Activated CD4-positive, alpha-beta memory T cell treated with anti-CD3 and anti-CD28 coated beads, Interleukin-2, amount 10 ng/mL, durations not matched to agents 7 days and 5 days (primary cell): ENCODE measurements at regions of chr5 and their contacts with region 1.

Region 1: DNA sequence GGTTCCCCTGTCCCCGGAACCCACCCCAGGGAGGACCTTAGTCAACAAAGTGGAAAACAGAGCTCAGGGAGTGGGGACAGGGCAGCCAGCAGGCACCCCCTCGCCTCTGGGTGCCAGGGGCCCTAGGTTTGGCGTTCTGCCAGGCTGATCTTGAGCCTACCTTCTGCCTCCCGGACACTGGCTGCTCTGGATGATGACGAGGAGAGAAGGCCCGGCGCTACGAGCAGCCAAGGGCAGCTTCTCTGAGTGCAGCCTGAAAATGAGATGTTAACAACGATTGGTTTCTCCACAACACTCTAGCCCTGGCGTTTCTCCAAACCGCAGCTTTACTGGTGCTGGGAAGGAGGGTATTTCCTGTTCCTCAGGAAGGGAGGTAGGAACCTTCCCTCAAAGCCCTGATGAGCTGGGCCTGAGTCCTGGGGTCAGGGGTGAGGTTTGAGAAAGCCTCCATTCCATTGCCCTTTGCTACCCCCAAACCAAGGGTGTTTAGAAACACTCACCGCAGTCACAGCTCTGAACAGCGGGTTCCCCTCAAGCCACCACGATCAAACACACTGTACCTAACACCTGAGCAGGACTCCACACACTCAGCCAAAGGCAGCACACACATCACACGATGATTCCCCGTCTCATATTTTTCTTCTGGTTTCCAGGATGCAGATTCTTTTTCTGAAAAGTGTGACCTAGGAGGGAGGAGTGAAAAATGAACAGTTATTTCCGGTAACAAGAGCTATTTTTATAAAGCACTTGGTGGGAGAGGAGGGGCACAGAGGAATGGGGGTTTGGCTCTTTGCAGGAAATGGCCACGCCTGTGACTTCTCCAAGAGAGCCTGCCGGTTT is at the start of gene STING1:
- DNase-seq: peak; percentile 67
- H3K4me3 Mint-ChIP-seq: peak within 1 kb of the TSS; percentile 96
- H3K27ac Mint-ChIP-seq: peak within 1 kb of the TSS; percentile 98
- H3K4me1 Mint-ChIP-seq: peaks cover 45% of the 10 kb centered on the region
- H3K27me3 Mint-ChIP-seq: no peaks in the 10 kb centered on the region
- total RNA-seq, gene STING1: 277 to 281 TPM

Region 2: GRCh38 chr5:139126711-139127111 is 355.6 kb before region 1 on chr5:
- CTCF ChIA-PET with region 1: no interaction called
- POLR2A ChIA-PET with region 1: no interaction called
- DNase-seq: no peak
- H3K4me3 Mint-ChIP-seq: no peak overlapping the region
- H3K27ac Mint-ChIP-seq: no peak overlapping the region
- H3K4me1 Mint-ChIP-seq: no peaks in the 10 kb centered on the region
- H3K27me3 Mint-ChIP-seq: no peaks in the 10 kb centered on the region

Region 3: DNA sequence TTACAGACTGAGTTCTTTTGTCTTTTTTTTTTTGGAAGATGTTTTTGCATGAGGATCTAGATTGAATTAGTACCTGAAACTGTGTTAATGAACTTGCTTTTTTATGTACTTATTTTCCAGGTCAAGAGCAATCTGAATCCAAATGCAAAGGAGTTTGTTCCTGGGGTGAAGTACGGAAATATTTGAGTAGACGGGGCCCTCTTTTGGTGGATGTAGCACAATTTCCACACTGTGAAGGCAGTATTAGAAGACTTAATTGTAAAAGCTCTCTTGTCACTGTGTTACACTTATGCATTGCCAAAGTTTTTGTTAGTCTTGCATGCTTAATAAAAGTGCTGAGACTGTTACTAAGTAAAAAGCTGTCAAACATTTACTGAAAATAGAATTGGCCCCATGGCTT is 113.7 kb before region 1 on chr5:
- CTCF ChIA-PET with region 1: no interaction called
- POLR2A ChIA-PET with region 1: no interaction called
- DNase-seq: no peak
- H3K4me3 Mint-ChIP-seq: no peak overlapping the region
- H3K27ac Mint-ChIP-seq: no peak overlapping the region
- H3K4me1 Mint-ChIP-seq: peaks cover 21% of the 10 kb centered on the region
- H3K27me3 Mint-ChIP-seq: no peaks in the 10 kb centered on the region

Region 4: GRCh38 chr5:139417214-139417613 is 65.1 kb before region 1 on chr5:
- CTCF ChIA-PET with region 1: interaction called, 23 read pairs
- POLR2A ChIA-PET with region 1: interaction called, 27 read pairs
- DNase-seq: no peak
- H3K4me3 Mint-ChIP-seq: no peak overlapping the region
- H3K27ac Mint-ChIP-seq: peak overlapping the region; percentile 93
- H3K4me1 Mint-ChIP-seq: peaks cover 83% of the 10 kb centered on the region
- H3K27me3 Mint-ChIP-seq: no peaks in the 10 kb centered on the region

Region 5: GRCh38 chr5:139439013-139439903 is 43.0 kb before region 1 on chr5 and contains the start of gene DNAJC18:
- CTCF ChIA-PET with region 1: interaction called, 15 read pairs
- POLR2A ChIA-PET with region 1: interaction called, 55 read pairs
- DNase-seq: peak; percentile 92
- H3K4me3 Mint-ChIP-seq: peak within 1 kb of the TSS; percentile 92
- H3K27ac Mint-ChIP-seq: peak within 1 kb of the TSS; percentile 98
- H3K4me1 Mint-ChIP-seq: peaks cover 70% of the 10 kb centered on the region
- H3K27me3 Mint-ChIP-seq: no peaks in the 10 kb centered on the region
- total RNA-seq, gene DNAJC18: 16.1 to 17.0 TPM

Region 6: DNA sequence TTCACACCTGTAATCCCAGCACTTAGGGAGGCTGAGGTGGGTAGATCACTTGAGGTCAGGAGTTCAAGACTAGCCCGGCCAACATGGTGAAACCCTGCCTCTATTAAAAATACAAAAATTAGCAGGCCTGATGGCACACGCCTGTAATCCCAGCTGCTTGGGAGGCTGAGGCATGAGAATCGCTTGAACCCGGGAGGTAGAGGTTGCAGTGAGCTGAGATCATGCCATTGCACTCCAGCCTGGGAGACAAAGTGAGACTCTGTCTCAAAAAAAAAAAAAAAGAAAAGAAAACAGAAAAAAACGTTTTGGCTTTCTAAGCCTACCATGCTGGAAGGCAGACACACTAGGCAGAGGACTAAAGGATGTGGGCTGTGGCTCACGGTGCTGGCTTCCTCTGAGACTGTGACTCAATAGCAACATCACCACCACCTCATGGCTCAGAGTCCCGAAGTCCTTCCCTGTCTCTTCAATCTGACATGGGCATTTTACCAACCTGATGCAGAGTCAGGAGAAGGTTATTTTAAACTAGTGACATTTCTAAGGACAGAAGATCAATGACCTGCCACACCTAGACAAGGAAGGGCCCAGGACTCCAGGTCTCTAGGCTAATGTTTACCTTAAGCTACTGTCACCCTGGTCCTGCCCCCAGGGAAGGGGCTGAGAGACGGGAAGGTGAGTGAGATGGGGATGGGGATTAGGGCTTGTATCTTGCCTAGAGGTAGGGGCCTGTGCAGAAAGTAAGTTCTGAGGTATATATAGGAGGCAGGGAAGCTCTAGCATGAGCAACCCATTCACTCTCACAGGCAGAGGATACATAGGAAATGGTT is 23.5 kb before region 1 on chr5:
- CTCF ChIA-PET with region 1: interaction called, 20 read pairs
- POLR2A ChIA-PET with region 1: interaction called, 58 read pairs
- DNase-seq: peak; percentile 90
- H3K4me3 Mint-ChIP-seq: peak overlapping the region; percentile 68
- H3K27ac Mint-ChIP-seq: peak overlapping the region; percentile 98
- H3K4me1 Mint-ChIP-seq: peaks cover 68% of the 10 kb centered on the region
- H3K27me3 Mint-ChIP-seq: no peaks in the 10 kb centered on the region

Region 7: GRCh38 chr5:139501381-139501780 is 19.1 kb after region 1 on chr5:
- CTCF ChIA-PET with region 1: interaction called, 7 read pairs
- POLR2A ChIA-PET with region 1: interaction called, 22 read pairs
- DNase-seq: no peak
- H3K4me3 Mint-ChIP-seq: no peak overlapping the region
- H3K27ac Mint-ChIP-seq: no peak overlapping the region
- H3K4me1 Mint-ChIP-seq: no peaks in the 10 kb centered on the region
- H3K27me3 Mint-ChIP-seq: peaks cover 9% of the 10 kb centered on the region

Region 8: GRCh38 chr5:139517683-139518564 is 35.7 kb after region 1 on chr5:
- CTCF ChIA-PET with region 1: interaction called, 46 read pairs
- POLR2A ChIA-PET with region 1: interaction called, 41 read pairs
- DNase-seq: peak; percentile 92
- H3K4me3 Mint-ChIP-seq: peak overlapping the region; percentile 85
- H3K27ac Mint-ChIP-seq: peak overlapping the region; percentile 83
- H3K4me1 Mint-ChIP-seq: peaks cover 41% of the 10 kb centered on the region
- H3K27me3 Mint-ChIP-seq: peaks cover 2% of the 10 kb centered on the region

Region 9: DNA sequence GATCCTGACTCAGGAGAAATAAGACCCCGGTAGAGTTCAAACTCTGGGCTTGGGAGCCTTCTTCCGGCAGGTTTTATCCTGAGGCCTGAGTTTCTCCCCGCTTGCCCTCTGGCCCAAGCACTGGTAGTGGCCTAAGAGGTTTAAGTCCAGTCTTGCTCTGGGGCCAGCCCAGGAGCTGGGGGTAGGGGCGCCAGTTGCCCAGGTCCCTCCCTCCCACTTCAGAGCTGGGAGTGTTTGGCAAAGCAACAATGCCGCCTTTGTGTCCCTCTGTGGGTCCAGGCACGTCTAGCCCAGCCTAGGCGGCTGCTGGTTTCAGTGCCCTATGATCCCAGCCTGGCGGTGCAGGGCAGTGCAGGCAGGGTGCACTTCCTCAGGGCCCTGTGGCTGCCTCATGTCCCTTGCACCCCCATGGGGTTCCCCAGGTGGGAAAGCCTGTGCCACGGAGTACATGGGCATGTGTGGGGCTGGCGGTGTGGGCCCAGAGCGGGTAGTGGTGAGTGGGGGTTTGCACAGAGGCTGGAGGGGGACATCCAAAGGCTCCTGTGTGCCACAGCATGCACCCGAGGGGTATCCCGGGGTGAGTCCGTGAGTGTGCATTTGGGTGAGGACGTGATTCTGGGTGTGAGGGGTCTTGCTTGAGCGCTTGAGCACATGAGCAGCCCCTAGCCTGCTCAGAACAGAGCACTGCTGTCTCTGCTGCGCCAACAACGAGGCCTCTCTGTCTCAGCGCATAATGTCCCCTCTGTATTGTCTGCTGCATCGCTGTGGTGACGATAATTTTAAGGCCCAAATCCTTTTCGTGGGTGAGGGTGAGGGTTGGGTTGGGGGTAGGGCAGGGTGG is 251.6 kb after region 1 on chr5:
- CTCF ChIA-PET with region 1: no interaction called
- POLR2A ChIA-PET with region 1: no interaction called
- DNase-seq: no peak
- H3K4me3 Mint-ChIP-seq: no peak overlapping the region
- H3K27ac Mint-ChIP-seq: no peak overlapping the region
- H3K4me1 Mint-ChIP-seq: no peaks in the 10 kb centered on the region
- H3K27me3 Mint-ChIP-seq: no peaks in the 10 kb centered on the region